ENCODE measurements at regions of chr4 and their contacts with region 1.

Region 1: GRCh38 chr4:98658287-98659105 is at the start of gene TSPAN5:
- DNase-seq: peak; percentile 84
- H3K4me3 ChIP-seq: peak within 1 kb of the TSS; percentile 59 to 83 (median 70)
- H3K27ac ChIP-seq: peak within 1 kb of the TSS; percentile 78 to 84 (median 80)
- H3K4me1 ChIP-seq: peaks cover 0 to 59% (median 34%) of the 10 kb centered on the region in 4 donors
- H3K27me3 ChIP-seq: no peaks in the 10 kb centered on the region
- CTCF ChIP-seq: no peak
- EP300 ChIP-seq: no peak
- POLR2A ChIP-seq: peak in 1 of 2 donors; percentile 27
- total RNA-seq, gene TSPAN5: 11.2 to 18.6 (median 13.5) TPM

Region 2: GRCh38 chr4:98467627-98468072 is 190.8 kb before region 1 on chr4:
- intact Hi-C with region 1: loop called (anchors 5 kb)
- DNase-seq: peak; percentile 89
- H3K4me3 ChIP-seq: peak overlapping the region in 3 of 4 donors; percentile 25 to 45 (median 42)
- H3K27ac ChIP-seq: peak overlapping the region in 2 of 4 donors; percentile 8 to 23
- H3K4me1 ChIP-seq: peaks cover 0 to 14% (median 12%) of the 10 kb centered on the region in 4 donors
- H3K27me3 ChIP-seq: no peaks in the 10 kb centered on the region
- CTCF ChIP-seq: peak; percentile 64 to 73 (median 69)
- EP300 ChIP-seq: no peak
- POLR2A ChIP-seq: no peak

Region 3: GRCh38 chr4:98493296-98493695 is 165.2 kb before region 1 on chr4:
- intact Hi-C with region 1: loop called (anchors 10 kb)
- DNase-seq: no peak
- H3K4me3 ChIP-seq: no peak overlapping the region
- H3K27ac ChIP-seq: no peak overlapping the region
- H3K4me1 ChIP-seq: peaks cover 0 to 57% (median 34%) of the 10 kb centered on the region in 4 donors
- H3K27me3 ChIP-seq: no peaks in the 10 kb centered on the region
- CTCF ChIP-seq: no peak
- EP300 ChIP-seq: no peak
- POLR2A ChIP-seq: no peak

Region 4: DNA sequence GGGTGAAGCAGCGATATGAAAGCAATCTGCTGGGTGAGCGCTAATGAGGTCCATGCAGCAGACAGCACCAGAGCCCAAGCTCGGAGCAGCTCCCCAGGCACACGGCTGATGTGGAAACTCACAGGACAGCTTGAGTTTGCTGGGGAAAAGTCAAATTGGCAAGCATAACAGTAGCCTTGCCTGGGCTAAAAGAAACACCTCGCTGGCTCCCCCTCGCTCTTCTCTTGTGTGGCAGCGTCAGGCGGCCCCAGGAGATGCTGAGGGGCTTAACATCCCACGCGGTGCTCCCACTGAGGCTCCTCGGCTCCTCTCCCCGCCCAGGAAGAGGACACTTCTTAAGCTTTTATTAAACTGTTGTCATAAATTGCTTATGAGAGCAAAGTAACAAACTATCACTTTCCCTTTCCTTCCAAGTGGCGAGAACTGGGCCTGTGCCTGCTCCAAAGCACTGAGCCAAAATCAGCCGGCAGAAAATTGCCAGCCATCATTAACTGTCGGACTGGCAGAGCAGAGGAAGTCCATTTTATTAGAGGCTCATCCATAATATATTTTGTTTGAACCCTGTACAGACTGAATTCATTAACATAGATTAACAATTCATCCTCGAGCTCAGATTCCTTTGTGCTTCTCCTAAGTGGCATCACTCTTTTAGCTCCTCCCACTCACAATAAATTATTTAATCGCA is 111.4 kb before region 1 on chr4:
- intact Hi-C with region 1: loop called (anchors 2 kb)
- DNase-seq: peak; percentile 75
- H3K4me3 ChIP-seq: peak overlapping the region; percentile 36 to 51 (median 46)
- H3K27ac ChIP-seq: peak overlapping the region; percentile 68 to 83 (median 80)
- H3K4me1 ChIP-seq: peaks cover 0 to 15% (median 9%) of the 10 kb centered on the region in 4 donors
- H3K27me3 ChIP-seq: no peaks in the 10 kb centered on the region
- CTCF ChIP-seq: no peak
- EP300 ChIP-seq: no peak
- POLR2A ChIP-seq: no peak

Region 5: DNA sequence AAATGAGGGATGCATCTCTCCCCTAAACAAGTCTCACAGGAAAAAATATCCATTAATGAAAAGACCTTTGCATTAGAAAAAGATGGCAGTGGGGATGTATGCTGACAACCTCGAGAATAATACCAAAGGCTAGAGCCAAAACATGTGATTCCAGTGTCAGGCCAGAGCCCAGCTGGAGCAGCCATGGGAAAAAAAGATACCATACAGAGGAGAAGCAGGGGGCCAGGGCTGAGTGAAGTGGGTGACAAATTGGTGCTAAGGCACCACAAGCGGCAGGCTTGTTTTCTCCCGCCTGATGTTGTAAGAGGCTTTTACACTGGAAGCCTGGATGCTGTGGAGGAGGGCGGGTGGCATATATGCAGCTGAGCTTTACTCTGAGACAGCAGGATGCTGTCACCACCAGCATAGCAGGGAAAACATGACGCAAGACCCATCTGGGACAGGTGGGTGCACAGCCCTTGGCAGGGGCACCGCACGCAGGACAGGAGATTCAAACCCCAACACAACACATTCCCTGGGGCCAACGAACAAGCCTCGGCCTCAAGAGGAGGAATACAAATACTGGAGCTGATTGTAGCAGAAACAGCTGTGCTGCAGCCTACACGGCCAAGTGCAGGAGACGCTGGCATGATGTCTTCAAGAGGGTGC is 92.0 kb before region 1 on chr4:
- intact Hi-C with region 1: loop called (anchors 5 kb)
- DNase-seq: peak; percentile 66
- H3K4me3 ChIP-seq: no peak overlapping the region
- H3K27ac ChIP-seq: peak overlapping the region; percentile 12 to 80 (median 68)
- H3K4me1 ChIP-seq: peaks cover 0 to 48% (median 24%) of the 10 kb centered on the region in 4 donors
- H3K27me3 ChIP-seq: no peaks in the 10 kb centered on the region
- CTCF ChIP-seq: no peak
- EP300 ChIP-seq: no peak
- POLR2A ChIP-seq: no peak

Region 6: DNA sequence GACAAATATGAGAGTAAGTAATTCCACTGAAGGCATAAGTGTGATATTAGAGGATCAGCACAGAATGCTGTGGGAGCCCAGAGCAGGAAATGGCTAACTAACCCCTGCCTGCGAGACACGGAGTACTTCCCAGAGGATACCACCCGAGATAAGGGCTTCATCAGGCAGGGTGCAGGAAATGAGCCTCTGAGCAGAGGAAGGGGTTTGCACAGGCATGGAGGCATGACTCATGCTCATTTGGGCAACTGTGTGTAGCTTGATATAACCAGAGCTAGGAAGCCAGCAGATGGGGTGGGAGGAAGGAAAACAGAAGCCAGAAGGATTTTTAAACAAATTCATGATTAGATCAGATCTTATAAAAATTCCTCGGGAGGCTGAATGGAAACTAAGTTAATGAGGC is 69.9 kb after region 1 on chr4:
- intact Hi-C with region 1: no loop called
- DNase-seq: no peak
- H3K4me3 ChIP-seq: no peak overlapping the region
- H3K27ac ChIP-seq: no peak overlapping the region
- H3K4me1 ChIP-seq: no peaks in the 10 kb centered on the region
- H3K27me3 ChIP-seq: no peaks in the 10 kb centered on the region
- CTCF ChIP-seq: no peak
- EP300 ChIP-seq: no peak
- POLR2A ChIP-seq: no peak

Region 7: DNA sequence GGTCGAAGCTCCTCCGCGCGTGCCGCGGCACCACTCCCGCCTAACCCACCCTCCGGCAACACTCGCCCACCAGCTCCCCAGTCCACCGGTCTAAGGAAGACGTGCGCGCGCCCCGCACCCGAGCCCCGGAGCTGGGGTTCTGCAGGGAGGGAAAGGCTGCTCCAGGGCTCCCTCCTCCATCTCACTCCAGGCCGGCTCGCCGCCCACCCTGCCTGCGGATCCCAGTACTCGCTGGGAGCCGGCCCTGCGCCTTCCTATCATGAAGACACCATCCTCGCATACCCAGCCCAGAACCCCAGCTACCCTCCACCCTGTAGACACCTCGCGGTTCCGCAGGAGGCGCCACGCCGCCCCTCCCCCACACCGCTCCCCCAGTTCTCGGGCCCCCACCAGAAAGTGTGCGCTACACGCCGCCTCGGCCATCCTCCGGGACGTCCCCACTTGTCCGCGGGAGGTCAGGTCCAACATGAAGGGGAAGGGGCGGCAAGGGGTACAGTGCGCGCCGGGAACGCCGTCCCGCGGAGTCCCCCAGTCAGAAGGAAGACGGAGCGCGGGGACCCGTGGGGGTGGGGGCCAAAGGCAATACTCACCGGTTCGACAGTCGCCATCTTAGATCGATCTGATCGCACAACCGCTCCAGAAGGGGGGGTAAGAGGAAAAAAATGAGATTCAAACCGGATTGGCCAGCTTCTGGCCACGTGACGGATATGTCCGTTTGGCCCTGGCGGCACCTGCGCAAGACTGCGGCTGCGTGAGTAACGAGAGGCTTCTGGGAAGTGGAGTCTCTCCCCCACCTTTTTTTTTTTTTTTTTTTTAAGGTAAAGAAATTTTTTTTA is 270.2 kb after region 1 on chr4 and contains the start of gene EIF4E:
- intact Hi-C with region 1: loop called (anchors 5 kb)
- DNase-seq: peak; percentile 99
- H3K4me3 ChIP-seq: peak within 1 kb of the TSS; percentile 59 to 98 (median 96)
- H3K27ac ChIP-seq: peak within 1 kb of the TSS; percentile 88 to 98 (median 95)
- H3K4me1 ChIP-seq: peaks cover 0 to 30% (median 22%) of the 10 kb centered on the region in 4 donors
- H3K27me3 ChIP-seq: no peaks in the 10 kb centered on the region
- CTCF ChIP-seq: peak in 3 of 4 experiments; percentile 2 to 17 (median 13)
- EP300 ChIP-seq: peak in 1 of 4 donors; percentile 17
- POLR2A ChIP-seq: no peak
- total RNA-seq, gene EIF4E: 38.5 to 81.3 (median 65.4) TPM